Naive thymus-derived CD4-positive, alpha-beta T cell (primary cell): ENCODE measurements at regions of chr6 and their contacts with region 1.

Region 1: GRCh38 chr6:90269334-90269733 is 27.3 kb downstream of the BACH2 start:
- DNase-seq: no peak
- ATAC-seq: no peak
- H3K4me3 ChIP-seq: no peak overlapping the region
- H3K4me3 Mint-ChIP-seq: peak overlapping the region in 7 of 10 donors; percentile 44 to 82 (median 63)
- H3K27ac ChIP-seq: peak overlapping the region; percentile 99
- H3K27ac Mint-ChIP-seq: peak overlapping the region; percentile 57 to 96 (median 92)
- H3K4me1 ChIP-seq: peaks cover 11 to 89% of the 10 kb centered on the region in 2 donors
- H3K4me1 Mint-ChIP-seq: peaks cover 57 to 99% (median 94%) of the 10 kb centered on the region in 7 donors
- H3K27me3 ChIP-seq: no peaks in the 10 kb centered on the region
- H3K27me3 Mint-ChIP-seq: no peaks in the 10 kb centered on the region

Region 2: DNA sequence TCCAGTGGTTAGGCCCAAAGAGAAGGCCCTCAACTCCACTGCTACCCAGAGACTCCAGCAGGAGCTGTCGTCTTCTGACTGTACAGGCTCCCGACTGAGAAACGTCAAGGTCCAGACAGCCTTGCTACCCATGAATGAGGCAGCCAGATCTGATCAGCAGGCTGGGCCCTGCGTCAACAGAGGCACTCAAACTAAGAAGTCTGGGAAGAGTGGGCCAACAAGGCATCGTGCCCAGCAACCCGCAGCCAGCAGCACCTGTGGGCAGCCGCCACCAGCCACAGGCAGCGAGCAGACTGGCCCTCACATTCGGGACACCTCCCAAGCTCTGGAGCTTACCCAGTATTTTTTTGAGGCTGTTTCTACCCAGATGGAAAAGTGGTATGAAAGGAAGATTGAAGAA is 638.8 kb before region 1 on chr6:
- CTCF ChIA-PET with region 1: no interaction called
- POLR2A ChIA-PET with region 1: no interaction called
- intact Hi-C with region 1: no loop called
- DNase-seq: no peak
- ATAC-seq: no peak
- H3K4me3 ChIP-seq: no peak overlapping the region
- H3K4me3 Mint-ChIP-seq: no peak overlapping the region
- H3K27ac ChIP-seq: no peak overlapping the region
- H3K27ac Mint-ChIP-seq: no peak overlapping the region
- H3K4me1 ChIP-seq: no peaks in the 10 kb centered on the region
- H3K4me1 Mint-ChIP-seq: peaks cover 0 to 14% (median 3%) of the 10 kb centered on the region in 7 donors
- H3K27me3 ChIP-seq: no peaks in the 10 kb centered on the region
- H3K27me3 Mint-ChIP-seq: no peaks in the 10 kb centered on the region

Region 3: GRCh38 chr6:90256698-90257485 is 12.4 kb before region 1 on chr6:
- CTCF ChIA-PET with region 1: interaction called, 4 read pairs
- POLR2A ChIA-PET with region 1: interaction called, 6 read pairs
- intact Hi-C with region 1: loop called (anchors 1 kb)
- DNase-seq: peak in 6 of 9 donors; percentile 57 to 76 (median 66)
- ATAC-seq: peak; percentile 82
- H3K4me3 ChIP-seq: no peak overlapping the region
- H3K4me3 Mint-ChIP-seq: peak overlapping the region in 7 of 10 donors; percentile 1 to 71 (median 20)
- H3K27ac ChIP-seq: peak overlapping the region; percentile 59
- H3K27ac Mint-ChIP-seq: peak overlapping the region; percentile 9 to 98 (median 75)
- H3K4me1 ChIP-seq: peaks cover 0 to 63% of the 10 kb centered on the region in 2 donors
- H3K4me1 Mint-ChIP-seq: peaks cover 42 to 97% (median 95%) of the 10 kb centered on the region in 7 donors
- H3K27me3 ChIP-seq: no peaks in the 10 kb centered on the region
- H3K27me3 Mint-ChIP-seq: no peaks in the 10 kb centered on the region

Region 4: DNA sequence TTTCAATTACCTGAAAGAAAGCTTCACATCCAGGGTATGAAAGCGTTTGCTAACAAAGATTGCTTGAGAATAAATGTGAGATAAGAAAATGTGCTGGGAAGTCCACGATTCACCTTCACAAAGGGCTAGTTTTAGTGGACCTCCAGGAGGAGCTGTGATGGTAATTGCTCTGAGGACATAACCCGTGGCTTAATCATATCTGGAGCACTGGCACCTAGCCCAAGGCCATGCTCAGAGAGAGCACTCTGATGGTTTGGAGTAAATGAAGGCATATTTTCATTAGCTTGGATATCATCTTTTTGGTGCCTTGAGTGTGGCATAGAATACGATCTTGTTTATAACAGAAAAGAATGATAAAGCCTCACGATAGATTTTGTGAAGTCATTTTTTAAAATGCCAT is 74.2 kb after region 1 on chr6:
- CTCF ChIA-PET with region 1: no interaction called
- POLR2A ChIA-PET with region 1: no interaction called
- intact Hi-C with region 1: no loop called
- DNase-seq: no peak
- ATAC-seq: no peak
- H3K4me3 ChIP-seq: no peak overlapping the region
- H3K4me3 Mint-ChIP-seq: no peak overlapping the region
- H3K27ac ChIP-seq: no peak overlapping the region
- H3K27ac Mint-ChIP-seq: no peak overlapping the region
- H3K4me1 ChIP-seq: no peaks in the 10 kb centered on the region
- H3K4me1 Mint-ChIP-seq: peaks cover 0 to 3% (median 0%) of the 10 kb centered on the region in 7 donors
- H3K27me3 ChIP-seq: no peaks in the 10 kb centered on the region
- H3K27me3 Mint-ChIP-seq: peaks cover 0 to 25% (median 0%) of the 10 kb centered on the region in 5 donors